ENCODE measurements at regions of chr10 and their contacts with region 1.

Region 1: DNA sequence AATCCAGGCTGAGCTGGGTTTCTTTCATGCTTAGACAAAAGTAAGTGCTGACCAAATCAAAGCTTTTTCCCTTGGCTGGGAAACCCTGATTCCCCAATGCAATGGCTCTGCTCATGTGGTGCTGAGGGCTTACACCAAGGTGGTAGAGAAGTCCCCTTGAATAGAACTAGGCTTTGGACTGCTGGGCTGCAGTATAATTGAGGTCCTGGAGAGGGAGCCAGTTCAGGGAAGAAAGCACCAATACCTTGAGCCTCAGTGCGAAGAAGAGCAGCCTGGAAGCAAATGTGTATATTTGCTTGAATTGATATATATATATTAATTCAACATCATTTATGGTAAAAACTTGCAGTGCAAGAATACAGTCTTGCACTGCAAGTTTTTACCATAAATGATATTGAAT is 391.1 kb downstream of the RPS24 start:
- DNase-seq: no peak
- H3K4me3 Mint-ChIP-seq: no peak overlapping the region
- H3K27ac Mint-ChIP-seq: no peak overlapping the region
- H3K4me1 Mint-ChIP-seq: no peaks in the 10 kb centered on the region
- H3K27me3 Mint-ChIP-seq: peaks cover 22% of the 10 kb centered on the region

Region 2: DNA sequence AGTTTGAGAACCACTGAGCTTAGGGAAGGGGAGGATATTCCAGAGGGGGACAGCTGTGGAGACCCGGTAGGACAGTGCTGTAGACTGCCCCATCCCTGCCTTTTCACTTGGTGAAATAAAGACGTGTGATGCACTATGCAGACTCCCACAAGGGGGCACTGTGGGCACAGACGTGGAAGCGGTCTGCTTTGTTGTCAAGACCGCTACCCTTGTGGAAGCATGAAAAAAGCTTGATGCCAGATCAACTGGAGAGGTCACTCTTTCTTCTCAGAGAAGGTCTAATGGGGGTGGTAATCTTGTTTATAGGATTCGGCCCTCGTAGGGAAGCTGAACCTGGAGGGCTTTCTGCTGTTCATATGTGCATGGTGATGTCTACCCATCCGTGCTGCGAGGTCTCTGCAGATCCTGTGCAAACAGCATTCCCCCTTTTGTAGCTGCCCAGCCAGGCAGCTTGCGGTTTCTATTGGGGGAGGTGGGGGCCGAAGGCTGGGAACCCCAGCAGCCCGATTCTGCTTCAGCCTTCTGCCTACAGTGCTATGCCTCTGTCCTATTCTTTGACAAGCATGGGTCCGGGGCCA is 377.3 kb before region 1 on chr10:
- intact Hi-C with region 1: loop called (anchors 5 kb)
- DNase-seq: peak; percentile 68
- H3K4me3 Mint-ChIP-seq: no peak overlapping the region
- H3K27ac Mint-ChIP-seq: no peak overlapping the region
- H3K4me1 Mint-ChIP-seq: peaks cover 10% of the 10 kb centered on the region
- H3K27me3 Mint-ChIP-seq: no peaks in the 10 kb centered on the region

Region 3: GRCh38 chr10:78700413-78700812 is 275.7 kb after region 1 on chr10:
- intact Hi-C with region 1: no loop called
- DNase-seq: no peak
- H3K4me3 Mint-ChIP-seq: no peak overlapping the region
- H3K27ac Mint-ChIP-seq: no peak overlapping the region
- H3K4me1 Mint-ChIP-seq: no peaks in the 10 kb centered on the region
- H3K27me3 Mint-ChIP-seq: peaks cover 3% of the 10 kb centered on the region